ENCODE measurements at regions of chr22 and their contacts with region 1.

Region 1: GRCh38 chr22:16932577-16932976 is 75.4 kb downstream of the GAB4 start:
- DNase-seq: peak in 22 of 42 donors; percentile 7 to 64 (median 36)

Region 2: GRCh38 chr22:16824716-16825678 is 107.6 kb before region 1 on chr22 and contains the start of gene XKR3:
- intact Hi-C with region 1: no loop called
- DNase-seq: peak in 18 of 42 donors; percentile 4 to 61 (median 28)

Region 3: DNA sequence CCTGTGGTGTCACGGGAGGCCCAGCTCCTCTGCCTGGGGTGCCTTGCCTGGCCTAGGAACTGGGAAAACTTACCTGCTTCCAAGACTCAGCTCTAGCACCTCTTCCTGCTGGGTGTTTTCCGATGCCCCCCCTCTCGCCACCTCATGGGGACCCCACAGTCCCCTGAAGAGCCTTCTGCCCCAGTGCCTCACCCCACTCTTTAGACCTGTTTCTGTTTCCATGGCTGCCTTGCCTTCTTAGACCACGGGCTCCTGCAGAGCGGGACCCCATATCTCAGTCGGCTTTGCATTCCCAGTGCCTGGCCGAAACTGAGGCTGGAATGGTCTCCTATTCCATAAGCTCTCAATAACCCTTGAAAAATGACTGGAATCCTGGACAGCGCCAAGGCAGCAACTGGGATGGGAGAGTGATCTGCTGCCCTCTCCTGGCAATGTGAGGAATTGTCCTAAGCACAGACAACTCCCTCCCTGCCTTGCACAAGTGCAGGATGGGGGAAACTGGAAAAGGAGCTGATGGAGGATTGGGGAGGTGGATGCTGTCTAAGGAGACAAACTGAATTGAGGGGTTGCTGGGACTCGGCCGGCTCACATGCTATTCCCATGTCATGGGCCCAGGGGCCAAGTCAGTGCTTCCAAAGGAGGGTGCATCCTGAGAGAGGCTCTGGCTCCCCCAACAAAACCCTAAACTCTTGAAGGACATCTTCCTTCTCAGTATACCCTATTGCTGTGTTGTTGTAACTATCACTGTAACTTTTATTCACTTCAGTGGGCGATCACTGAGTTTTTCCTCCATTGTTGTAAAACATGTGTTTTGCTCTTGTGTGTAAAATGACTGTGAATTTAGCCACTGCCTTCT is 125.6 kb after region 1 on chr22:
- intact Hi-C with region 1: loop called (anchors 10 kb)
- DNase-seq: peak; percentile 28 to 92 (median 80)

Measured in head of caudate nucleus (tissue), 42 donors.